Panc1 (cell line): ENCODE measurements at regions of chr6 and their contacts with region 1.

Region 1: GRCh38 chr6:110095101-110095500 is 84.4 kb downstream of the WASF1 start:
- DNase-seq: no peak
- ATAC-seq: no peak
- H3K4me3 ChIP-seq: no peak overlapping the region
- H3K27ac ChIP-seq: no peak overlapping the region
- H3K4me1 ChIP-seq: no peaks in the 10 kb centered on the region
- H3K27me3 ChIP-seq: no peaks in the 10 kb centered on the region
- CTCF ChIP-seq: no peak

Region 2: DNA sequence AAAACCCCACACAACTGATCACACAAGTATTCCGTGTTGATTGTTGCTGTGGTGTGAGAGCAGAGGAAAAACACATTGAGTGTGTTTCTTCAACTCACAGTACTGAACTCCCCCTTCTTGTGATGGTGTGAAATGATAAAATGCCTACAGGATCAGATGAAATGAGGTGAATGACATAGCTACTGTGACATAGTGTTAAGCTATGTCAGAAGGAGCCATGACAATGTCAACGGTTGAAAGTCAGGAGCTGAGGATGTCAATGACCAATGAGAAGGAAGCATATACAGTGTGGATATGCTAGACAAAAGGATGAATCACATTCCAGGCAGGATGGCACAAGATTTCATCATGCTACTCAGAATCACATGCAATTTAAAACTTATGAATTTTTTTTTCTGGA is 45.5 kb after region 1 on chr6:
- CTCF ChIA-PET with region 1: no interaction called
- POLR2A ChIA-PET with region 1: interaction called, 14 read pairs
- in situ Hi-C with region 1: no loop called
- intact Hi-C with region 1: no loop called
- DNase-seq: peak; percentile 12
- ATAC-seq: no peak
- H3K4me3 ChIP-seq: no peak overlapping the region
- H3K27ac ChIP-seq: peak overlapping the region; percentile 14; the same call in 1 of the 2 replicates
- H3K4me1 ChIP-seq: no peaks in the 10 kb centered on the region
- H3K27me3 ChIP-seq: no peaks in the 10 kb centered on the region
- CTCF ChIP-seq: no peak